ENCODE measurements at regions of chr11 and their contacts with region 1.

Region 1: GRCh38 chr11:60345489-60345888 is 18.4 kb downstream of the MS4A6E start:
- DNase-seq: peak; percentile 21
- H3K4me3 Mint-ChIP-seq: no peak overlapping the region
- H3K27ac Mint-ChIP-seq: no peak overlapping the region
- H3K4me1 Mint-ChIP-seq: no peaks in the 10 kb centered on the region
- H3K27me3 Mint-ChIP-seq: peaks cover 26% of the 10 kb centered on the region

Region 2: DNA sequence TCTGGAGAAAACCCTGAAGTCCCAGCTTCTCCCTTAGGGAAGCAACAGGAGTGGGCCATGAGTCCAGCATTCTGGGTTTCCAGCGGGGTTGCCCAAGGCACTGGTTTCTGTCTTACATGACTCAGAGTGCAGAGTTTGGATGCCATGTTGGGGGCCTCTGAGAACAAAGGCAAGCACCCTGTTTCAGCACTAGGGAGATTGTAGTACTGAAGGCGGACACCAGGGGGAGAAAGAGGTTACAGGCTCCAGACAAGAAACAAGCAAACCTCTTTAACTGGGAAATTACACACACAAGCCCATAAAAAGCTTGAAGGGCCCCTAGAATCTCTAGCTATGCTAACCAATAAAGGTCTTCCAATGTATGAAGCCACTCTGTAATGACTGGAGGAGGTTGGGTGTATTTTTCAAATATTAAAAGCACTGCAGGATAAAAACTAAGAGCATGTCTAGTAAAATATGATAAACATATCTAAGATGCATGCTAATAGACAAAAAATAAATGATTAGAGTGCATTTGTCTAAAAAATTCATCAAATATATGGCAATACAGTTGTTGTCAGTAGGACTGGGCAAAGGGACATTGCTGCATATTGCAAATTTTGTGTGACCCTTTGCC is 11.4 kb before region 1 on chr11:
- CTCF ChIA-PET with region 1: interaction called, 33 read pairs
- POLR2A ChIA-PET with region 1: no interaction called
- intact Hi-C with region 1: no loop called
- DNase-seq: peak; percentile 74
- H3K4me3 Mint-ChIP-seq: no peak overlapping the region
- H3K27ac Mint-ChIP-seq: no peak overlapping the region
- H3K4me1 Mint-ChIP-seq: no peaks in the 10 kb centered on the region
- H3K27me3 Mint-ChIP-seq: peaks cover 25% of the 10 kb centered on the region

Measured in activated CD4-positive, alpha-beta memory T cell treated with anti-CD3 and anti-CD28 coated beads for 36 hours (primary cell).